GM10248 (cell line): ENCODE measurements at regions of chr7 and their contacts with region 1.

Region 1: DNA sequence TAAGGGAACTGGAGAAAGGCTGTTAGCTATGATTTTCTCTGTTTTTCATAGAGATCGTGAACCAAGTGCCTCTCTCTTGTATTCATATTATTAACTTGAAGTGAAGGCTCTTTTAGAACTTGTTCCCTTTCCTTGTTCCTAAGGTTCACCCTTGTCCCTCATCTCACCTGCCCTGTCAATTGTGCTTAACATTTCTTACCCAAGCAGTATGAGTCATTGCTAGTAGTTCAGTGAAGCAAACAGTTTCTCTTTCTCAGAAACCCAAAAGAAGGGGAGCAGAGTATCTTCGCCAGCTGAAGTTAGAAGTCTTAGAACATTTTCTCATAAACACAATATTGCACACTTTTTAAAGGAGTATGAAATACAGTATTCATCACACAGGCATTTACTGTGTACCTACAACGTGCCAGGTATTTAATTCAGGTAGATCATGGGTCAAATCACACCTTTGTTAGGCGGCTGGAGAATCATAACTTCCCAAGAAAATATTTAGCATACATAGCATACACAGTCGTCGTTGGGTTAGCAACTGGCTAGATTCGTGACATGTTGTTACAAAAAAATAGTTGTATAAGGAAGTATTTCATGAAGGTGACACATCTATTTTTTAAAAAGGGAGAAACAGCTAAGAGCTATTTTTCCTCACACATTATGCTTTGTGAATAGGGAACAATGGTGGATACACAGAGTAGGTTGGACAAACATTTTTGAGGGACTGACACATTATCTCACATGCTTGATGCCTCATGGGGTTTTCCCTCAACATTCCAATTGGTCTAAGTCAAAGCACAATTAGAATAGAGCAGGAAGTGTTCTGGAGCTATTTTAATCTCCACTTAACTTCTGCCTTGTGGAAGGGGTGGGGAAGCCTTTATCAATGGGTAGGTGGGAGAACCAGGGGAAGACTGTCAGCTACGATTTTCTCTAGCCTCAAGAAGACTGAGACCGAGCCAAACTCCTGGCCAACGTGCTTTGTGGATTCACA is 13.2 kb downstream of the HDAC9 start:
- DNase-seq: peak; percentile 42
- CTCF ChIP-seq: no peak

Region 2: GRCh38 chr7:18495412-18496340 is 13.1 kb before region 1 on chr7 and contains the start of gene HDAC9:
- CTCF ChIA-PET with region 1: interaction called, 58 read pairs
- POLR2A ChIA-PET with region 1: interaction called, 7 read pairs
- DNase-seq: peak; percentile 31
- CTCF ChIP-seq: no peak

Region 3: GRCh38 chr7:18520450-18521235 is 11.9 kb after region 1 on chr7:
- CTCF ChIA-PET with region 1: interaction called, 30 read pairs
- POLR2A ChIA-PET with region 1: interaction called, 7 read pairs
- DNase-seq: no peak
- CTCF ChIP-seq: no peak

Region 4: DNA sequence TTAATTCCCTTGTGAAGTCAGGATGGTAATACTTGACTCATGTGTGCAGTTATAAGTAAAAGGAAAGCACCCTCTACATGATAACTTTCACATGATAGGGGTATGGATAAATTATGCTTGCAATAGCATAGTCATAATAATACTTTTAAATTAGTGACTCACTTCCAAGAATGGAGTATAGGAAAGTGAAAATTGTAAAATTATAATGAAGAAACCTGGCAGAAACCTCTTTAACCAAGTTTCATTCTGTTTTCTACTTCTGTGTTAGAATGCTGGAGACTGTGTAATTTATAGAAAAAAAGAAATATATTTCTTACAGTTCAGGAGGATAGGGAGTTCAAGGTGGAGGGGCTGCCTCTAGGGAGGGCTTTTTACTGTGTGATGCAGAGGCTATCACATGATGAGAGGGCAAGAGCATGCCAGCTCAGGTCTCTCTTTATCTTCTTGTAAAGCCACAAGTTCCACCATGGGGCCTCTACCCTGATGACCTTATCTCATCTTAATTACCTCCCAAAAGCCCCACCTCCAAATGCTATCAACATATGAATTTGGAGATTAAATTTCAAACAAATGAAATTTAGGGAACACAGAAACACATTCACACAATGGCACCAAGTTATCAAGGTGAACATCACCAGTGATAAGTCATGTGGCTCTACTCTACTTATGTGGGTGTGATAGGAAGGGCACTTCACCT is 30.0 kb after region 1 on chr7:
- CTCF ChIA-PET with region 1: interaction called, 22 read pairs
- POLR2A ChIA-PET with region 1: no interaction called
- DNase-seq: no peak
- CTCF ChIP-seq: no peak